H1 (cell line): ENCODE measurements at regions of chr14 and their contacts with region 1.

Region 1: DNA sequence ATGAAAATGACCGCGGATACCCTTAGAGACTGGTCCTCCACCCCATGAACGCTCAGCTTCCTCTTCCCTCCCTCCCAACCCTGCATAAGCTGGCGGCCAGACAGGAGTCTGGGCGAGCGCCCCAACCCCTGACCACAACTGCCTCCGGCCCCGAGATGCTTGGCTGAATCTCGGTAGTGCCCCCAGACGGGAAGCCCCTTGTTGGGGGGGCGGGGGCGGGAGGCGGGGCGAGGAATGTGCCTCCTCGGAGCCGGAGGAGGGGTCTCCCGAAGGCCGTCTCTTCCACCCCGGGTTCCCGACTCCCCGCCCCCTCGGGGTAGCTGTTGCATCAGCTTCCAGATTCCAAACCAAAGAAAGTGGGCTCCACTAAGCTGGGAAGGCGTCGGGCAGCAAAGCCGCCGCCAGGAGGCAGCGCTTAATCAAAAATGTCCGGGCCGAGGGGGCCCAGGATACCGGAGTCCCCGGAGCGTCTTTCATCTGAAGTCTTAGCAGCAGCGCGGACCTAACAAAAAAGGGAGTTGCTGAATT is 7.1 kb upstream of the MRPL52 start:
- DNase-seq: peak; percentile 92 to 95
- H3K4me3 ChIP-seq: peak overlapping the region; percentile 57 to 94 (median 76)
- H3K27ac ChIP-seq: peak overlapping the region; percentile 95
- H3K4me1 ChIP-seq: peaks cover 16 to 26% (median 20%) of the 10 kb centered on the region in 4 experiments
- H3K27me3 ChIP-seq: no peaks in the 10 kb centered on the region
- CTCF ChIP-seq: peak; percentile 76 to 97 (median 79)
- EP300 ChIP-seq: peak in 1 of 2 experiments; percentile 87; a peak in 1 of 3 replicates
- POLR2A ChIP-seq: peak in 1 of 2 experiments; percentile 53; a peak in 2 of 3 replicates
- RAD21 ChIP-seq: peak; percentile 94 to 97

Region 2: DNA sequence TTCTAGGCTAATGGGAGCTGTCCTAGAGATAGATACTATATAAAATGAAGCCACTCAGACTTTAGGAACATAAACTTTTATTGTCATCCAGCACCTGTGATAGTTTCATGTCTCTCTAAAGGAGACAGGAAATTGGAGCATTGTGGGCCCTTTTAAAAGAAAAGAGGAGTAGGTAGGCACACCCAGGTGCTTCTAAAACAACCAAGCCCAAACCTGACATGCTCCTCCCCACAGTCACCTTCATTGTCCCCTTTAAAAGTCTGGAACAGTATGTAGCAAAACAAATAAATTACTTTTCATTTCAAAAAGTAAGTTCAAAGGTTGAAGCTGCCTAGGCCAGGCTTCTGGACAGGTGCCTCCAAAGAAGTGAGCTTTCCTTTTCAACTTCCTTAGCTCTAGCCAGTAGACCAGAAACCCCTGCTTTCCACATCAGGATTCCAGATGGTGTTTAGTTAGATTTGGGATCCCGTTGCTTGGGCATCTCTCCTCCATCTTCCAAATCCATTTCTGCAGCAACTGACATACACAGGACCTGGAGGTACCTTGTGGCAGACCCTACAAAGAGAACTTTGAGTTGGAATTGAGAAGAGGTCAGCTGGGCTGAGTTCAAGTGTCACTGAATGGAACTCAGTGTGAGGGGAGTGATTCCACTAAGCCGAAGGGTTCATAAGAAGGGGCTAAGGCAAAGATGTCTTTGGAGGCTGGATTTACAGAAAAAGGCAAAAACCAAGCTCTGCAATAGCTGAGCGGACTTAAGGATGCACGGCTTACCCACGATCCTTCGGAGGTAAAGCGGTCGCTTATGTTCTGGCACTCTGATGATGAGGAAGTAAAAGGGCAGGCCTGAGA is 49.2 kb before region 1 on chr14:
- CTCF ChIA-PET with region 1: interaction called, 12 read pairs
- POLR2A ChIA-PET with region 1: interaction called, 6 read pairs
- DNase-seq: no peak
- H3K4me3 ChIP-seq: no peak overlapping the region
- H3K27ac ChIP-seq: no peak overlapping the region
- H3K4me1 ChIP-seq: no peaks in the 10 kb centered on the region
- H3K27me3 ChIP-seq: no peaks in the 10 kb centered on the region
- CTCF ChIP-seq: no peak
- EP300 ChIP-seq: no peak
- POLR2A ChIP-seq: no peak
- RAD21 ChIP-seq: no peak

Region 3: DNA sequence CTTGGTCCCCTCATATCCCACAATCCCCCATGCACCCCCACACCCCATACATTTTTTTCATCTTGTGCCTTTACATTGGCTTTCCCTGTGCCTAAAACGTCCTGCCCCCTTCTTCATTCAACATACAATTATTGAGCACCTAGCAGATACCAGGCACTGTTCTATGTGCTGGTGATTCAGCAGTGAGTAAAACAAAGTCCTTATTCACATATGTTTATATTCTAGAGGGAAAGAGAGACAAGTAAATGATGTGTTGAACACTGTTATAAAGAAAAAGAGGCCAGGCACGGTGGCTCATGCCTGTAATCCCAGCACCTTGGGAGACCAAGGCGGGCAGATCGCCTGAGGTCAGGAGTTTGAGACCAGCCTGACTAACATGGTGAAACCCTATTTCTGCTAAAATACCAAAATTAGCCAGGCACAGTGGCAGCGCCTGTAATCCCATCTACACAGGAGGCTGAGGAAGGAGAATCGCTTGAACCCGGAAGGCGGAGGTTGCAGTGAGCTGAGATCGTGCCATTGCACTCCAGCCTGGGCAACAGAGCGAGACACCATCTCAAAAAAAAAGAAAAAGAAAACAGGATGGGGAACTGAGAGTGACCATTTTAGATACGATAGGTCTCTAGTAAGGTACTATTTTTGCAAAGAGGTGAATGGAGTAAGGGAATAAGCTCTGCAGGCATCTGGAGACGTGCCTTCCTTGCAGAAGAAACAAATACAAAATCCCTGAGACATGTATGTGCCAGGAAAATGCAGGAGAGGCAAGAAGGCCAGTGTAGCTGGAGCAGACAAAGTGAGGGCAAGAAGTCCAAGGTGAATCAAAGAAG is 19.6 kb before region 1 on chr14:
- CTCF ChIA-PET with region 1: interaction called, 38 read pairs
- POLR2A ChIA-PET with region 1: interaction called, 7 read pairs
- DNase-seq: no peak
- H3K4me3 ChIP-seq: no peak overlapping the region
- H3K27ac ChIP-seq: no peak overlapping the region
- H3K4me1 ChIP-seq: 0 out of 7 replicates have a peak, but pooled peaks cover 0 to 2% (median 0%) of the 10 kb centered on the region in 4 experiments
- H3K27me3 ChIP-seq: no peaks in the 10 kb centered on the region
- CTCF ChIP-seq: no peak
- EP300 ChIP-seq: no peak
- POLR2A ChIP-seq: no peak
- RAD21 ChIP-seq: no peak

Region 4: DNA sequence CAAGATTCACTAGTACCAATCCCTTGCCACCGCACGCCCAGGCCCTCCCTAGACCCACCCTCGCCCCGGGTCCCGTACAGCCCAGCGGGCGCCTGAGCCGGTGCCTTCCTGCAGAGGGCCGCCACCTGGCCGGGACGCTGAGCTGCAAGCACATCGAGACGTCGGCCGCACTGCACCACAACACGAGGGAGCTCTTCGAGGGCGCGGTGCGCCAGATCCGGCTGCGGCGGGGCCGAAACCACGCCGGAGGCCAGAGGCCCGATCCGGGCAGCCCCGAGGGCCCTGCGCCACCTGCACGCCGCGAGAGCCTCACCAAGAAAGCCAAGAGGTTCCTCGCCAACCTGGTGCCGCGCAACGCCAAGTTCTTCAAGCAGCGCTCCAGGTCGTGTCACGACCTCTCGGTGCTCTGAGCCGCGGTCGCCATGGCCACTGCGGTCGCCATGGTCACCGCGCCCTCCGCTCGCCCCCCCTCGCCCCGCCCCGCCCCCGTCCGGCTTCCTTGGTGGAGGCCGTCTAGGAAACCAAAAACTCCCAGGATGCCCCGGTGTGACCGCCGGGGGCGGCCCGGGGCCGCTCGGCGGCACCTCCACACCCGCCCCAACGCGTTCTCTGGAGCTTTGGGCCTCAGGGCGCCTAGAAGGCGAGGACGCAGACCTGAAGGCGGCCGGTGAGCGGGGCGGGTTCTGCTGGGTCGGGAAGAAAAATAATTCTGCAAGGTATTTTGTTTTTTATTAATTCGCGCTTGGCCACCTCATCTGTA is 64.0 kb after region 1 on chr14:
- CTCF ChIA-PET with region 1: interaction called, 1,562 read pairs
- POLR2A ChIA-PET with region 1: interaction called, 52 read pairs
- DNase-seq: peak in 1 of 2 experiments; percentile 87
- H3K4me3 ChIP-seq: peak overlapping the region; percentile 57 to 83 (median 65)
- H3K27ac ChIP-seq: peak overlapping the region; percentile 25
- H3K4me1 ChIP-seq: peaks cover 7 to 21% (median 12%) of the 10 kb centered on the region in 4 experiments
- H3K27me3 ChIP-seq: peaks cover 0 to 17% (median 11%) of the 10 kb centered on the region in 4 experiments; a peak in 6 of 7 replicates
- CTCF ChIP-seq: peak; percentile 17 to 35 (median 21); a peak in 3 of 4 replicates
- EP300 ChIP-seq: no peak
- POLR2A ChIP-seq: peak in 1 of 2 experiments; percentile 75; a peak in 2 of 3 replicates
- RAD21 ChIP-seq: peak in 1 of 2 experiments; percentile 6; a peak in 2 of 4 replicates

Region 5: GRCh38 chr14:22996768-22997654 is 174.4 kb after region 1 on chr14:
- CTCF ChIA-PET with region 1: no interaction called
- POLR2A ChIA-PET with region 1: no interaction called
- DNase-seq: no peak
- H3K4me3 ChIP-seq: no peak overlapping the region
- H3K27ac ChIP-seq: no peak overlapping the region
- H3K4me1 ChIP-seq: peaks cover 0 to 5% (median 2%) of the 10 kb centered on the region in 4 experiments; a peak in 2 of 7 replicates
- H3K27me3 ChIP-seq: no peaks in the 10 kb centered on the region
- CTCF ChIP-seq: no peak
- EP300 ChIP-seq: no peak
- POLR2A ChIP-seq: no peak
- RAD21 ChIP-seq: no peak